Transverse colon (tissue), 4 donors: ENCODE measurements at regions of chr1 and their contacts with region 1.

Region 1: DNA sequence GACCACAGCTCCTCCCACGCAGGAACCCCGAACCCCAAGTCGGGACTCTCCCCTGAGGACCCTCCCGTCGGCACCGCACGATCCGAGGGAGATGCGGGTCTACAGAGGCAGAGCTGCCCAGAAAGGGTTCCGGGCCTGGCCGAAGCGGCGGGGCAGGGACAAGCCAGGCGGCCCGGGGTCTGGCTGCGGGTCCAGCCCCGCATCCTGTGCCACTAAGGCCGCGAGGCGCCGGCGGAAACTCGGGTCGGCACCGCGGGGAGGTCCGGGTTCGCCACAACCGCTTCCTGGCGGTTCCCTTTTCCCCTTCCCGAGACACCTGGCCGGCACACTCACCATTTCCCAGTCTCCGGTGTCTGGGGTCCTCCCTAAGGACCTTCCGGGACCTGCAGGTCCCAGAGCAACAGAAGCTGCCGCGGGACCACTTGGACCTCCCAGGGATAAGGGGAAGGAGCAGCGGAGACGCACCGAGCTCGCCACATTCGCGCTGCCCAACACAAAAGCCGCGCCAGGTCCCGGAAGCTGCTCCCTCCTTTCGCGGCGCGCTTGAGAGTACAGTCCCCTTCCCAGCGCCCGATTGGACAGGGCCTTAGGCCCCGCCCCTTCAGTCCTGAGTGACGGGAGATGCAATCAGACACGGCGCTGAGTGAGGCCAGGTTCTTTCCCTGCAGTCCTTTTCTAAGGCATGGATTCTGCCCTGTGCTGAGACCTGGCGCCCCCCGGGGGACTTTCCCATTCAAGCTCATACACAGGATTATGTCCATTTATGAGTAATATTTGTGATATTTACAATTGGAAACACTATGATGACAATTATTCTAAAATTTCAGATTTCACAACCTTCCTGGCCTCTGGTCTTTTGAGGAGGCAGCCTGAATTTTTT is at the start of gene ZNF670:
- DNase-seq: peak; percentile 97
- H3K4me3 ChIP-seq: peak within 1 kb of the TSS; percentile 54 to 96 (median 78)
- H3K27ac ChIP-seq: peak within 1 kb of the TSS; percentile 80 to 84 (median 83)
- H3K4me1 ChIP-seq: peaks cover 0 to 18% (median 7%) of the 10 kb centered on the region in 4 donors
- H3K27me3 ChIP-seq: no peaks in the 10 kb centered on the region
- CTCF ChIP-seq: no peak
- EP300 ChIP-seq: no peak
- POLR2A ChIP-seq: peak; percentile 69
- total RNA-seq, gene ZNF670: 1.9 to 4.6 (median 2.6) TPM

Region 2: DNA sequence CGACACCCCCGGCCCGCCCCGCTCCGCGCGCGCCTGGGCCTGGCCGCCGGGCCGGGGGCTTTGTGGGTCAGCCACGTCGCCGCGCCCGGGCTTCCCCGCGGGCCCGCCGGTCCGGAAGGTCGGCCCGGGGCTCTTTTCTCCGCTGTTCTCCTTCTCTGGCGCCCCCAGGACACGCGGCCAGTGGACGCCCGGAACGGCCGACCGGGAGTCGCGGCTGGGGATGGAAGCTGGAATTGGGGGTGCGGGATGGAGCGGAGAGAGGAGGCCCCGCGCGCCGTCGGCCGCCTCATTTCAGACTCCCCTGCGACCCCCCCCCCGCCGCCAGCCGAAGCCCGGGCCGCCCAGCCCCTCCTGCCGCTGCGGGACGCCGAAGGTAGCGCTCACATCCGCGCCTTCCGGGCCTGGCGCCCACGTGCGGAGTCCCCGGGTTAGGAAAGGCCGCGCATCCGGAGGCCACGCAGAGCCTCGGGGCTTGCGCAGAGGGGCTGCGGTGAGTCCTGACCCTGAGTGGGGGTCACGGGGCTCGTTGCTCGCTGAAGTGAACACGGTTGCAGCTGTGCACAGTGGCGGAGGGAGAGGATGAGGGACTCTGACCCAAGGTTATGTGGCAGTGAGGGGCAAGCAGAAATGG is 253.6 kb after region 1 on chr1:
- in situ Hi-C with region 1: no loop called
- intact Hi-C with region 1: loop called (anchors 2 kb)
- DNase-seq: peak; percentile 61
- H3K4me3 ChIP-seq: peak overlapping the region; percentile 75 to 98 (median 91)
- H3K27ac ChIP-seq: peak overlapping the region; percentile 93 to 98 (median 96)
- H3K4me1 ChIP-seq: peaks cover 8 to 25% (median 19%) of the 10 kb centered on the region in 4 donors
- H3K27me3 ChIP-seq: no peaks in the 10 kb centered on the region
- CTCF ChIP-seq: no peak
- EP300 ChIP-seq: no peak
- POLR2A ChIP-seq: no peak